ENCODE measurements at regions of chr4 and their contacts with region 1.

Region 1: GRCh38 chr4:144174401-144175067 is 34.0 kb upstream of the GYPA start:
- DNase-seq: peak; percentile 59
- ATAC-seq: peak; percentile 72
- H3K4me3 ChIP-seq: no peak overlapping the region
- H3K27ac ChIP-seq: no peak overlapping the region
- H3K4me1 ChIP-seq: no peaks in the 10 kb centered on the region
- H3K27me3 ChIP-seq: no peaks in the 10 kb centered on the region
- CTCF ChIP-seq: peak; percentile 56
- POLR2A ChIP-seq: no peak
- RAD21 ChIP-seq: peak; percentile 68

Region 2: GRCh38 chr4:144509088-144510015 is 334.8 kb after region 1 on chr4:
- CTCF ChIA-PET with region 1: no interaction called
- POLR2A ChIA-PET with region 1: no interaction called
- dilution Hi-C with region 1: no loop called
- in situ Hi-C with region 1: no loop called
- intact Hi-C with region 1: no loop called
- DNase-seq: no peak
- ATAC-seq: no peak
- H3K4me3 ChIP-seq: no peak overlapping the region
- H3K27ac ChIP-seq: no peak overlapping the region
- H3K4me1 ChIP-seq: no peaks in the 10 kb centered on the region
- H3K27me3 ChIP-seq: no peaks in the 10 kb centered on the region
- CTCF ChIP-seq: no peak
- POLR2A ChIP-seq: no peak
- RAD21 ChIP-seq: no peak

Region 3: DNA sequence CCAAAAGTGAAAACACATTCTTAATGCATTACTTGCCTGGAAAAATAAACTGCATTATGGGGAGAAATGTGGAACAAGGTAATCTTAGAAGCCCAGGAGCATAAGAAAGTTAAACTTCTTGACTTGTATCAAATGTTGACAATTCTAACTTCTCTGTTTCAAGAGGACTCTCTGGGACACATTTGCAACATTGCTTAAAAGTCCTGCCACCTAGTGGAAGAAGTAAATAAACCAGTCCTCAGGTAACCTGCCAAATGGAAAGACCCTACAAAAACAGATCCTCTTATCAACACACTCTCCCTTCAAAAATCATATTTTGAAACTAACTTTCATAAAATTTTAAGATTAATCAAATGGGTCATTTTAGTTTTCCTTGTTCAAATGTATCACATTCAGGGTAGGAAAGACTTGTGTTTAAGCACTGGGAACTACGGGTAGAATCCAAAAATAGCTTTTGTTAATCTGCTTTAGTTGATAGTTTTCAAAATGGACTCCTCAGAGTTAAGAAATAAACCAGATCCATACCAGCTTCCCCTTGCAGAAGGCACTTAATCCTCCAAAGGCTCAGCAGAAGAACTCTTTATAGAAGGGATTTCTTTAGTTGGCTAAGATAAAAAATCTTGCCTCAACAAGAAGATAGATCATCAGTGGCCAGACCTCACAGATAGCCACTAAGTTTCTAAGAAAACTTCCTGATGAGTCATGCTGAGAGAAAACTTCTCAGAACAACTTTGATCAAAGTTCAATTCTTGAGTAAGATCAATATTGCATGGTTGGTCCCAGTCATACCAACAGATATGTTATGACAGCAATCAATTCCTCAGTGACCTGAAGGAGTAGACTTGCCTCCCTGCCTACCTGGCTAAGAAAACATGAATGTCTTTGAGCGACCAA is 613.1 kb after region 1 on chr4:
- CTCF ChIA-PET with region 1: no interaction called
- POLR2A ChIA-PET with region 1: no interaction called
- dilution Hi-C with region 1: no loop called
- in situ Hi-C with region 1: no loop called
- intact Hi-C with region 1: loop called (anchors 1 kb)
- DNase-seq: peak; percentile 49
- ATAC-seq: no peak
- H3K4me3 ChIP-seq: no peak overlapping the region
- H3K27ac ChIP-seq: no peak overlapping the region
- H3K4me1 ChIP-seq: no peaks in the 10 kb centered on the region
- H3K27me3 ChIP-seq: no peaks in the 10 kb centered on the region; the same call in 1 of the 2 replicates
- CTCF ChIP-seq: peak; percentile 48
- POLR2A ChIP-seq: no peak
- RAD21 ChIP-seq: peak; percentile 60

Region 4: DNA sequence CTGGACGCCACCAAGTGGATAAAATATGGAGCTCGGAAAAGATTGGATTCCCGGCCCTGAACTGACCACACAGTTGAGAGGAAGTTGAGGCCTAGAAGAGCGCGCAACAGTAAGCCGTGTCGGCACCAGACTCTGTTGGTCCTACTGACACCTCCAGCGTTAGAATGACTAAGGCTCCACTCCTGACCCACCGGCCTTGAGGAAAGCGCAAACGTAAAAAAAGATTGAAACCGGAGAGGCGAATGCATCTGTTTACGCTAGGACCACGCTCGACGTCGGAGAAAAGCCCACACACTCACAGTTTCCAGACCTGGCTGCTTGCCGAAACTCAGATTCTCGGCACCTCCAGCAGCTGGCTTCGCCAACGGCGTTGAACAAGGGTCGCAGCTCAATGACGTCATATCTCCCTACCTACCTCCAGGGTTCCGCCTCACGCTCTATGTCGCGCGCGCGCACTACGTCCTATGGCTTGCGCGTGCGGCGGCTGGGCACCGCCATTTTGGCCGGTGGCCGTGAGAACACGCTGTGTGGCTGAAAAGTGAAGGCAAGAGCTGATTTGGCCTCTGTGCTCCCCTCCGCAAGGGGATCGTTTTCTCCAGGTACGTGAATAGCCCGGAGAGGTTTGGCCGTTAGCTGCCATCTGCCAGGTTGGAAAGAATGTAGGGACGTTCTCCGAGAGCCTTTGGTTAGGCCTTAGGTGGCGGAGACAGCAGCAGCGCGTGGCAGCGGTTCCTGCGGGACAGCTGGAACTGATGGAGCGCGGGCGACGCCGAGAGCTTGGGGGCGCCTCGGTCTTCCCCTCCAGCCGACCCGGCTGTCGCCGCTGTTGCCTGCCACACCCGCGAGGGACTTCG is 923.5 kb after region 1 on chr4 and contains the starts of genes ABCE1 and ANAPC10:
- CTCF ChIA-PET with region 1: no interaction called
- POLR2A ChIA-PET with region 1: no interaction called
- dilution Hi-C with region 1: no loop called
- in situ Hi-C with region 1: no loop called
- intact Hi-C with region 1: loop called (anchors 1 kb)
- DNase-seq: peak; percentile 99
- ATAC-seq: peak; percentile 95
- H3K4me3 ChIP-seq: peak within 1 kb of the TSS; percentile 60
- H3K27ac ChIP-seq: peak within 1 kb of the TSS; percentile 80
- H3K4me1 ChIP-seq: no peaks in the 10 kb centered on the region
- H3K27me3 ChIP-seq: no peaks in the 10 kb centered on the region
- CTCF ChIP-seq: peak; percentile 49
- POLR2A ChIP-seq: peak; percentile 82
- RAD21 ChIP-seq: peak; percentile 43
- total RNA-seq, gene ABCE1: 212 and 219 TPM in 2 replicates
- total RNA-seq, gene ANAPC10: 22.4 and 25.8 TPM in 2 replicates

Region 5: GRCh38 chr4:145580906-145581305 is 1406.4 kb after region 1 on chr4:
- CTCF ChIA-PET with region 1: no interaction called
- POLR2A ChIA-PET with region 1: no interaction called
- dilution Hi-C with region 1: no loop called
- in situ Hi-C with region 1: loop called (anchors 25 kb)
- intact Hi-C with region 1: no loop called
- DNase-seq: no peak
- ATAC-seq: no peak
- H3K4me3 ChIP-seq: no peak overlapping the region
- H3K27ac ChIP-seq: no peak overlapping the region
- H3K4me1 ChIP-seq: no peaks in the 10 kb centered on the region
- H3K27me3 ChIP-seq: peaks cover 7% of the 10 kb centered on the region
- CTCF ChIP-seq: no peak
- POLR2A ChIP-seq: no peak
- RAD21 ChIP-seq: no peak

Measured in IMR-90 (cell line).